AG04450 (cell line): ENCODE measurements at regions of chr16 and their contacts with region 1.

Region 1: GRCh38 chr16:50136399-50136798 is 16.7 kb upstream of the TENT4B start:
- DNase-seq: no peak
- H3K4me3 ChIP-seq: no peak overlapping the region
- H3K27ac ChIP-seq: no peak overlapping the region
- H3K27me3 ChIP-seq: peaks cover 5% of the 10 kb centered on the region
- CTCF ChIP-seq: no peak

Region 2: GRCh38 chr16:49980166-49980565 is 156.2 kb before region 1 on chr16:
- CTCF ChIA-PET with region 1: no interaction called
- POLR2A ChIA-PET with region 1: no interaction called
- DNase-seq: no peak
- H3K4me3 ChIP-seq: no peak overlapping the region
- H3K27ac ChIP-seq: no peak overlapping the region
- H3K27me3 ChIP-seq: no peaks in the 10 kb centered on the region
- CTCF ChIP-seq: no peak

Region 3: GRCh38 chr16:50079397-50080140 is 56.8 kb before region 1 on chr16:
- CTCF ChIA-PET with region 1: no interaction called
- POLR2A ChIA-PET with region 1: no interaction called
- DNase-seq: no peak
- H3K4me3 ChIP-seq: no peak overlapping the region
- H3K27ac ChIP-seq: no peak overlapping the region
- H3K27me3 ChIP-seq: no peaks in the 10 kb centered on the region
- CTCF ChIP-seq: no peak

Region 4: GRCh38 chr16:50245417-50246298 is 109.3 kb after region 1 on chr16:
- CTCF ChIA-PET with region 1: no interaction called
- POLR2A ChIA-PET with region 1: interaction called, 10 read pairs
- DNase-seq: no peak
- H3K4me3 ChIP-seq: peak overlapping the region; percentile 54
- H3K27ac ChIP-seq: no peak overlapping the region
- H3K27me3 ChIP-seq: peaks cover 23% of the 10 kb centered on the region
- CTCF ChIP-seq: no peak